ENCODE measurements at regions of chr5 and their contacts with region 1.

Region 1: GRCh38 chr5:91499943-91500531 is 116.9 kb upstream of the ARRDC3 start:
- DNase-seq: no peak
- ATAC-seq: peak; percentile 36
- H3K4me3 Mint-ChIP-seq: no peak overlapping the region
- H3K27ac Mint-ChIP-seq: no peak overlapping the region
- H3K4me1 Mint-ChIP-seq: no peaks in the 10 kb centered on the region
- H3K27me3 Mint-ChIP-seq: no peaks in the 10 kb centered on the region

Region 2: DNA sequence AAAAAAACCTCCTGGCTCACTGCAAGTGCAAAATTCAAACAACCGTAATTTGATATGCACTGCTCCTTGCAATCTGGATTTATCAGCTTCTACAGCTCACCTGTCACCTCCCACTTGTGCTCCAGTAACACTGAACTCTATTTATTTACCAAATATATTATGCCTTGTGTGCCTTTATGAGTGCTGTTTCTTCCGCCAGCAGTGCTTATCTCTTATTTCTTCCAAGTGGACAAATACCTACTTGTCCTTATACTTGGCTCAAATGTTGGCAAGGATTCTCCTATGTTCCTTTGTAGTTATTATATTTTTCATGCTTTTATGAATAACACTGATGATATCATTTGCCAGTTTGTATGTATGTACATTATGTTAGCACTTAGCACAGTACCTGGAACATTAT is 28.8 kb after region 1 on chr5:
- CTCF ChIA-PET with region 1: no interaction called
- POLR2A ChIA-PET with region 1: no interaction called
- intact Hi-C with region 1: no loop called
- DNase-seq: no peak
- ATAC-seq: no peak
- H3K4me3 Mint-ChIP-seq: no peak overlapping the region
- H3K27ac Mint-ChIP-seq: no peak overlapping the region
- H3K4me1 Mint-ChIP-seq: no peaks in the 10 kb centered on the region
- H3K27me3 Mint-ChIP-seq: no peaks in the 10 kb centered on the region

Region 3: GRCh38 chr5:91635950-91636734 is 136.1 kb after region 1 on chr5:
- CTCF ChIA-PET with region 1: interaction called, 8 read pairs
- POLR2A ChIA-PET with region 1: no interaction called
- intact Hi-C with region 1: loop called (anchors 1 to 10 kb)
- DNase-seq: no peak
- ATAC-seq: no peak
- H3K4me3 Mint-ChIP-seq: no peak overlapping the region
- H3K27ac Mint-ChIP-seq: no peak overlapping the region
- H3K4me1 Mint-ChIP-seq: no peaks in the 10 kb centered on the region
- H3K27me3 Mint-ChIP-seq: no peaks in the 10 kb centered on the region

Region 4: DNA sequence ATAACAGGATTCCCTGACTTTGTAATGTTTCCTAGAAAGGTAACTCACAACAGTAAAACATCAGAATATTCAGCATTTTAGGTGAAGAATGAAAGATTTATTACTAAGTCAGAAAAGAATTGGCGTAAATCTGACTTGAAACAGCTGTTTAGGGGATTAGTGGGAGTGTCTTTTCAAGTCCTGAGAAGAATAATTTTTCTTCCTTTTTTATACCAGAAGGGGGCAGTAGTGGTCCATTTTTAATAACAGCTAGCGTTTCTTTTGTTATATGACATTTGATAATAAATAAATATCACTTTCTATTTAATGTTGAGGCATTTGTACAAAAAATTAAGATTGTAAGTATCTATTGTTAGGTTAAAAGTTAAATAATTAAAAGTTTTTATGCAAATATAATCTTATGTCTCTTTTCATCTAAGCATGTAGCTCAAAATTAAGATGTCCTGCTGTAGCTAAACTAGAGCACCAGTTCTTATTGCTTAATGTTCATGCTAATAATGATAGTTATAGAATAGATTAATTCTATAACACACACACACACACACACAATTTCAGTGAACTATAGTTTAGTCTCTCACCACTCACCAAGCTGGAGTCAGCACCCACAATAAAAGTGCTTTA is 141.8 kb after region 1 on chr5:
- CTCF ChIA-PET with region 1: interaction called, 8 read pairs
- POLR2A ChIA-PET with region 1: no interaction called
- intact Hi-C with region 1: loop called (anchors 1 to 10 kb)
- DNase-seq: no peak
- ATAC-seq: no peak
- H3K4me3 Mint-ChIP-seq: no peak overlapping the region
- H3K27ac Mint-ChIP-seq: no peak overlapping the region
- H3K4me1 Mint-ChIP-seq: no peaks in the 10 kb centered on the region
- H3K27me3 Mint-ChIP-seq: no peaks in the 10 kb centered on the region